ENCODE measurements at regions of chr13 and their contacts with region 1.

Region 1: DNA sequence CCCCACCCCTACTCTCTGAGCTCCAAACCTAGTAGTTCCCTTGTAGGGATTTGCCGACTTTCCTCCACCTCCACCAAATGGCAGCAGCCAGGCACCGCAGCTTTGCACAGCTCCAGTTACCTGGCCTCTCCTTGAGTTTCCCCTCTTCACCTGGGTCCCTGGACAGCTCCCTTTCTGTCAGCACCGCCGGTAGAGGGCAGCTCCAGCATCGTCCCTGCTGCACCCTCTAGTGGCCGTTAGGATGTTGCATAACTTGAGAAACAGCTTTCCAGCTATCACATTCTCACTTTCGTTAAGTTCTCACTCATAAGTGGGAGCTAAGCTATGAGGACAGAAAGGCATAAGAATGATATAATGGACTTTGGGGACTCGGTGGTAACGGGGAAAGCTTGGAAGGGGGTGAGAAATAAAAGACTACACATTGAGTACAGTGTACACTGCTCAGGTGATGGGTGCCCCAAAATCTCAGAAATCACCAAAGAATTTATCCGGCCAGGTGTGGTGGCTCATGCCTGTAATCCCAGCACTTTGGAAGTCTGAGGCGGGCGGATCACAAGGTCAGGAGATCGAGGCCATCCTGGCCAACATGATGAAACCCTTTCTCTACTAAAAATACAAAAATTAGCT is 60.4 kb upstream of the OLFM4 start:
- DNase-seq: peak; percentile 60
- ATAC-seq: peak; percentile 84
- H3K4me3 ChIP-seq: no peak overlapping the region
- H3K4me3 Mint-ChIP-seq: no peak overlapping the region
- H3K27ac ChIP-seq: no peak overlapping the region
- H3K27ac Mint-ChIP-seq: no peak overlapping the region
- H3K4me1 ChIP-seq: no peaks in the 10 kb centered on the region
- H3K4me1 Mint-ChIP-seq: no peaks in the 10 kb centered on the region
- H3K27me3 ChIP-seq: no peaks in the 10 kb centered on the region
- H3K27me3 Mint-ChIP-seq: peaks cover 7% of the 10 kb centered on the region
- CTCF ChIP-seq: peak; percentile 90

Region 2: GRCh38 chr13:52862358-52863206 is 105.6 kb before region 1 on chr13:
- CTCF ChIA-PET with region 1: interaction called, 15 read pairs
- POLR2A ChIA-PET with region 1: no interaction called
- intact Hi-C with region 1: no loop called
- DNase-seq: peak; percentile 14
- ATAC-seq: no peak
- H3K4me3 ChIP-seq: no peak overlapping the region
- H3K4me3 Mint-ChIP-seq: no peak overlapping the region
- H3K27ac ChIP-seq: no peak overlapping the region
- H3K27ac Mint-ChIP-seq: no peak overlapping the region
- H3K4me1 ChIP-seq: no peaks in the 10 kb centered on the region
- H3K4me1 Mint-ChIP-seq: no peaks in the 10 kb centered on the region
- H3K27me3 ChIP-seq: peaks cover 0 to 3% (median under 1%) of the 10 kb centered on the region in 4 experiments
- H3K27me3 Mint-ChIP-seq: peaks cover 15% of the 10 kb centered on the region
- CTCF ChIP-seq: peak; percentile 56

Region 3: DNA sequence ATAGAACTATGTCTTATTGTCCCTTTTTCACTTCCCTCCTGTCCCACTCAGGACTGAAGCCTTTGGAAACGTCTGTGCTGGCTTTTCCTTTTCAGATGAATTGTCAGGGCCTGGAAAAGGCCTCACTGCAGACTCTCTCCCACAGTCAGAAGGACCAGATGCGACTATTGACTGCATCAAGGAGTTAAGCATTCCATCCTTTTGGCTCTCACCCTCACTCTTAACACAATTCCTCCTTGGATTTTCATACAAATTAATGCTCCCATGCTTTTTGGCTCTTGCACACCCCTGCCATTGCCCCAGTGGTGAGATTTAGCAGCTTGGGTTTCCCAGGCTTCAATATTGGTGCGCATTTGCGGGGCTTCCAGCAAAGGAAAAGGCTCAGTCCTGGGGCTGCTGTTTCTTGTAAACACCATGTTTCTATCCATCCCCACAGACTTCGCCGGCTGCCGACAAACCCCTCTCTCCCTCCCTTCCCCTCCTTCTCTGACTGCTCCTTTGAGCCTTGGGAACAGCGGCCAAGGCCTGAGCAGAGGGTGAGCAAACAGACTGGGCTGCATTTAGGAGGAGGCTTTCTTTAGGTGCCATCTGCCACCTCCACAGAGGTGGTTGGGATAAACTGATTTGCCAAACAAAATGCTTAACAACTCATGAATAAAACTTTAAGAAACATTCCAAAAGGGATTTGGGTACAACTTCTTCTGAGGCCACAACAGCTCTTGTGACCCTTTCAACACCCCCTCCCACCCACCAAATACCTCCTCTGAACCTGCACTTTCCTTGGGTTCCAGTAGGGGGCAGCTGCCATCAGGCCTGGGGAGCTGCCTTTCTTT is 71.1 kb before region 1 on chr13:
- CTCF ChIA-PET with region 1: interaction called, 38 read pairs
- POLR2A ChIA-PET with region 1: no interaction called
- intact Hi-C with region 1: loop called (anchors 1 kb)
- DNase-seq: peak; percentile 11
- ATAC-seq: no peak
- H3K4me3 ChIP-seq: no peak overlapping the region
- H3K4me3 Mint-ChIP-seq: no peak overlapping the region
- H3K27ac ChIP-seq: no peak overlapping the region
- H3K27ac Mint-ChIP-seq: no peak overlapping the region
- H3K4me1 ChIP-seq: no peaks in the 10 kb centered on the region
- H3K4me1 Mint-ChIP-seq: no peaks in the 10 kb centered on the region
- H3K27me3 ChIP-seq: no peaks in the 10 kb centered on the region
- H3K27me3 Mint-ChIP-seq: peaks cover 11% of the 10 kb centered on the region
- CTCF ChIP-seq: peak; percentile 41

Region 4: GRCh38 chr13:52903320-52903719 is 64.9 kb before region 1 on chr13:
- CTCF ChIA-PET with region 1: interaction called, 38 read pairs
- POLR2A ChIA-PET with region 1: no interaction called
- intact Hi-C with region 1: no loop called
- DNase-seq: no peak
- ATAC-seq: peak; percentile 65
- H3K4me3 ChIP-seq: no peak overlapping the region
- H3K4me3 Mint-ChIP-seq: no peak overlapping the region
- H3K27ac ChIP-seq: no peak overlapping the region
- H3K27ac Mint-ChIP-seq: no peak overlapping the region
- H3K4me1 ChIP-seq: no peaks in the 10 kb centered on the region
- H3K4me1 Mint-ChIP-seq: peaks cover 10% of the 10 kb centered on the region
- H3K27me3 ChIP-seq: no peaks in the 10 kb centered on the region
- H3K27me3 Mint-ChIP-seq: peaks cover 21% of the 10 kb centered on the region
- CTCF ChIP-seq: no peak

Region 5: GRCh38 chr13:52911340-52911739 is 56.8 kb before region 1 on chr13:
- CTCF ChIA-PET with region 1: interaction called, 13 read pairs
- POLR2A ChIA-PET with region 1: no interaction called
- intact Hi-C with region 1: no loop called
- DNase-seq: no peak
- ATAC-seq: no peak
- H3K4me3 ChIP-seq: no peak overlapping the region
- H3K4me3 Mint-ChIP-seq: no peak overlapping the region
- H3K27ac ChIP-seq: no peak overlapping the region
- H3K27ac Mint-ChIP-seq: no peak overlapping the region
- H3K4me1 ChIP-seq: no peaks in the 10 kb centered on the region
- H3K4me1 Mint-ChIP-seq: peaks cover 5% of the 10 kb centered on the region
- H3K27me3 ChIP-seq: no peaks in the 10 kb centered on the region
- H3K27me3 Mint-ChIP-seq: peaks cover 9% of the 10 kb centered on the region
- CTCF ChIP-seq: no peak

Region 6: GRCh38 chr13:52955472-52955874 is 12.7 kb before region 1 on chr13:
- CTCF ChIA-PET with region 1: interaction called, 35 read pairs
- POLR2A ChIA-PET with region 1: no interaction called
- intact Hi-C with region 1: no loop called
- DNase-seq: no peak
- ATAC-seq: no peak
- H3K4me3 ChIP-seq: no peak overlapping the region
- H3K4me3 Mint-ChIP-seq: no peak overlapping the region
- H3K27ac ChIP-seq: no peak overlapping the region
- H3K27ac Mint-ChIP-seq: no peak overlapping the region
- H3K4me1 ChIP-seq: no peaks in the 10 kb centered on the region
- H3K4me1 Mint-ChIP-seq: no peaks in the 10 kb centered on the region
- H3K27me3 ChIP-seq: no peaks in the 10 kb centered on the region
- H3K27me3 Mint-ChIP-seq: no peaks in the 10 kb centered on the region
- CTCF ChIP-seq: no peak

Region 7: GRCh38 chr13:52980695-52981094 is 12.5 kb after region 1 on chr13:
- CTCF ChIA-PET with region 1: interaction called, 24 read pairs
- POLR2A ChIA-PET with region 1: no interaction called
- intact Hi-C with region 1: no loop called
- DNase-seq: no peak
- ATAC-seq: no peak
- H3K4me3 ChIP-seq: no peak overlapping the region
- H3K4me3 Mint-ChIP-seq: no peak overlapping the region
- H3K27ac ChIP-seq: no peak overlapping the region
- H3K27ac Mint-ChIP-seq: no peak overlapping the region
- H3K4me1 ChIP-seq: no peaks in the 10 kb centered on the region
- H3K4me1 Mint-ChIP-seq: no peaks in the 10 kb centered on the region
- H3K27me3 ChIP-seq: peaks cover 0 to 2% (median 0%) of the 10 kb centered on the region in 4 experiments
- H3K27me3 Mint-ChIP-seq: peaks cover 11% of the 10 kb centered on the region
- CTCF ChIP-seq: no peak

Region 8: DNA sequence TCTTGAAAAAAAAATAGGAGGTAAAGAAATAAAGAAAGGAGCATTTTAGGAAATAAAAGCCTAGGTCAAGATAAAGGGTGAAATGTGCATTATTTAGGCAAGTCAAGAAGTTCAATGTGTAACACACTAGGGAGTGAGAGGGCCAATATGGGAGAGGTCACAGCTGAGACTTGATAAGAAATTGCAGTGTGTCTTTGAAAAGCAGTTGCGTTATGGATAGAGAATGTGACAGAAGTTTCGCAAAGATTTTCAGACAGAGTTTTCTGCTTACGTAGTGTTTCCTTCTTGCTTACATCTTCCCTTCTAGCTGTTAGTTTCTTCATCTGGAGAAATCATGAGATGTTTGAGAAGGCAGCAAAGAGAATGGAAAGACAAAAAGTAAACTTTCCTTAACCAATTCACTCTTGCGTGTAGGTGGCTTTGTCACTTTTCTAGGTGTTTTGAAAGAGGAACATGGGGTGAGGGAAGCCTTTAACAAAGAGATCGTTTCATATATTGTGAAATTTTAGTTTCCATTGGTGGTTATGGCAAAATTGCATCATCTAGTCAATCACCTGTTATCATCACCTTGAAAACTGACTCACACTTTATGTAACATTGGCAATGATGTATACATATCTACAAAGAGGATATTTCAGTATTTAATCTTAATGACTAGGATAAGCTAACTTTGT is 1036.0 kb after region 1 on chr13:
- CTCF ChIA-PET with region 1: no interaction called
- POLR2A ChIA-PET with region 1: no interaction called
- intact Hi-C with region 1: no loop called
- DNase-seq: no peak
- ATAC-seq: no peak
- H3K4me3 ChIP-seq: no peak overlapping the region
- H3K4me3 Mint-ChIP-seq: no peak overlapping the region
- H3K27ac ChIP-seq: no peak overlapping the region
- H3K27ac Mint-ChIP-seq: no peak overlapping the region
- H3K4me1 ChIP-seq: no peaks in the 10 kb centered on the region
- H3K4me1 Mint-ChIP-seq: no peaks in the 10 kb centered on the region
- H3K27me3 ChIP-seq: no peaks in the 10 kb centered on the region
- H3K27me3 Mint-ChIP-seq: no peaks in the 10 kb centered on the region
- CTCF ChIP-seq: no peak

Measured in B cell (primary cell).